ENCODE measurements at regions of chrX and their contacts with region 1.

Region 1: GRCh38 chrX:130120746-130121504 is 10.6 kb upstream of the ELF4 start:
- DNase-seq: peak in 34 of 35 experiments; percentile 33 to 76 (median 57)
- ATAC-seq: peak; percentile 87 to 94 (median 89)
- H3K4me3 ChIP-seq: peak overlapping the region; percentile 39 to 49
- H3K4me3 Mint-ChIP-seq: peak overlapping the region; percentile 64 to 69 (median 68)
- H3K27ac ChIP-seq: no peak overlapping the region
- H3K27ac Mint-ChIP-seq: peak overlapping the region in 1 of 2 donors; percentile 36
- H3K4me1 ChIP-seq: peaks cover 0 to 34% of the 10 kb centered on the region in 2 experiments
- H3K4me1 Mint-ChIP-seq: peaks cover 0 to 20% (median 18%) of the 10 kb centered on the region in 3 donors
- H3K27me3 ChIP-seq: no peaks in the 10 kb centered on the region
- H3K27me3 Mint-ChIP-seq: peaks cover 0 to 8% of the 10 kb centered on the region in 2 donors

Region 2: DNA sequence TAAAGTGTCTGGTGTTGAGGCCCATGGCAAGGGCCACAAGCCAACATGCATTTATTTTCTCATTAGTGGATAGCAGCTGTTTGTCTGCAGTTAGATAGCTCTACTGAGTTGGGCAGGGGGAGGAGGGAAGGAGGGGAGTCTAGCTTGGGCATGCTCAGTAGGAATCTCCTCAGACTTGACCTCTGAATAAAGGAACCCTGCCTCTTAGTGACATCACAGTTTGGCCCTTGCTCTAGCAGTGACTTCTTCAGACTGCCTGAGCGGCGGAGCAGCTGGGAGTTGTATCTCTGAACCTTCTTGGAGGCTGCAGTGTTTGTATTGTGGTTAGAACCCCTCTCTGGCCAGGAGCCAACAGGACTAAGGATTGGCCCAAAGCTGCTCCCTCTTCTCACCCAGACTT is 81.1 kb before region 1 on chrX:
- CTCF ChIA-PET with region 1: no interaction called
- POLR2A ChIA-PET with region 1: no interaction called
- DNase-seq: no peak
- ATAC-seq: no peak
- H3K4me3 ChIP-seq: no peak overlapping the region
- H3K4me3 Mint-ChIP-seq: no peak overlapping the region
- H3K27ac ChIP-seq: no peak overlapping the region
- H3K27ac Mint-ChIP-seq: no peak overlapping the region
- H3K4me1 ChIP-seq: no peaks in the 10 kb centered on the region
- H3K4me1 Mint-ChIP-seq: no peaks in the 10 kb centered on the region
- H3K27me3 ChIP-seq: no peaks in the 10 kb centered on the region
- H3K27me3 Mint-ChIP-seq: no peaks in the 10 kb centered on the region

Region 3: GRCh38 chrX:130079824-130080406 is 41.0 kb before region 1 on chrX:
- CTCF ChIA-PET with region 1: interaction called, 22 to 24 read pairs
- POLR2A ChIA-PET with region 1: interaction called, 3 to 7 read pairs
- DNase-seq: peak in 31 of 35 experiments; percentile 16 to 79 (median 42)
- ATAC-seq: no peak
- H3K4me3 ChIP-seq: no peak overlapping the region
- H3K4me3 Mint-ChIP-seq: peak overlapping the region in 1 of 3 donors; percentile 40
- H3K27ac ChIP-seq: no peak overlapping the region
- H3K27ac Mint-ChIP-seq: peak overlapping the region; percentile 70 to 76
- H3K4me1 ChIP-seq: peaks cover 5 to 55% of the 10 kb centered on the region in 2 experiments
- H3K4me1 Mint-ChIP-seq: peaks cover 38 to 51% (median 45%) of the 10 kb centered on the region in 3 donors
- H3K27me3 ChIP-seq: no peaks in the 10 kb centered on the region
- H3K27me3 Mint-ChIP-seq: peaks cover 0 to 6% of the 10 kb centered on the region in 2 donors

Region 4: GRCh38 chrX:130086447-130087206 is 34.3 kb before region 1 on chrX:
- CTCF ChIA-PET with region 1: interaction called, 22 to 23 read pairs
- POLR2A ChIA-PET with region 1: no interaction called
- DNase-seq: peak; percentile 36 to 79 (median 67)
- ATAC-seq: peak; percentile 73 to 77 (median 74)
- H3K4me3 ChIP-seq: peak overlapping the region; percentile 53 to 58
- H3K4me3 Mint-ChIP-seq: peak overlapping the region; percentile 74 to 90 (median 83)
- H3K27ac ChIP-seq: peak overlapping the region; percentile 68
- H3K27ac Mint-ChIP-seq: peak overlapping the region; percentile 94 to 98
- H3K4me1 ChIP-seq: peaks cover 10 to 96% of the 10 kb centered on the region in 2 experiments
- H3K4me1 Mint-ChIP-seq: peaks cover 72 to 81% (median 81%) of the 10 kb centered on the region in 3 donors
- H3K27me3 ChIP-seq: no peaks in the 10 kb centered on the region
- H3K27me3 Mint-ChIP-seq: no peaks in the 10 kb centered on the region

Region 5: DNA sequence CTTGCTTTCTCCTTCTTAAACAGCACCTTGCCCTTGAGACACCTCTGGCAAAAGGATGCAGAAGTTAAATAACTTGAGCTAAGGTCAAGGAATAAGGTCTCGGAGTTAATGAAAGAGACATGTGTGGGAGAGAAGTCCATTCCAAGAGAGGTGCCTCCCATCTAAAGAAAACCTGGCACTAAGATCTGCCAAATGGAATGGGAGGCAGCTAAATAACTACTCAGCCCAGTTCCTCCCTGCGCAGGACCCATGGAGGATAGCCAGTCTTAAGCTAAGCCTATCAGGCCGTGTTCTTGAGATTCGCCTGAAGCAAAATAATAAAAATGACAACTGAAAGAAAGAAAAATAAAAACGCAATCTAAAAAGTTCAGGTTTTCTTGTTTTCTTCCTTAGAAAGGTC is 10.1 kb after region 1 on chrX:
- CTCF ChIA-PET with region 1: no interaction called
- POLR2A ChIA-PET with region 1: no interaction called
- DNase-seq: no peak
- ATAC-seq: no peak
- H3K4me3 ChIP-seq: no peak overlapping the region
- H3K4me3 Mint-ChIP-seq: no peak overlapping the region
- H3K27ac ChIP-seq: no peak overlapping the region
- H3K27ac Mint-ChIP-seq: no peak overlapping the region
- H3K4me1 ChIP-seq: no peaks in the 10 kb centered on the region
- H3K4me1 Mint-ChIP-seq: no peaks in the 10 kb centered on the region
- H3K27me3 ChIP-seq: no peaks in the 10 kb centered on the region
- H3K27me3 Mint-ChIP-seq: no peaks in the 10 kb centered on the region